ENCODE measurements at regions of chr10 and their contacts with region 1.

Region 1: GRCh38 chr10:15571575-15571974 is 148.1 kb downstream of the ITGA8 start:
- DNase-seq: no peak

Region 2: DNA sequence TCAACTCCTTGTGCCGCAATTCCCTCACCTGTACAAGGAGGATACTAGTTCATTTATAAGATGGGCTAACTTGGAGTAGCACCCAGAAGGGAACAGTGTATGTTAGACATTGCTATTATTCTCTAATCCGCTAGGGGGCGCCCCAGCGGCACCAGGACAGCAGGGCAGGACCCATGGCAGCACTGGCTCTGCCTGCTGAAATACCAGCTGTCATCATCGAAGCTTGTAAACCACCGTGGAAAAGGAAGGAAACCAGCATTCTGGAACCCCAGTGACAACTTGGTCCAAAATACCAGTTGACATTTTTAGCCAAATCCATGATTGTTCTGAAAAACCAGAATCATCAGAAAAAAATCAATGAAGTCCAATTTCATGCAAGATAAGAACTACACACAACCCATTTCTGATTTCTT is 13.7 kb after region 1 on chr10:
- CTCF ChIA-PET with region 1: interaction called, 10 read pairs
- POLR2A ChIA-PET with region 1: no interaction called
- DNase-seq: peak; percentile 84